T-cell (primary cell): ENCODE measurements at regions of chr2 and their contacts with region 1.

Region 1: DNA sequence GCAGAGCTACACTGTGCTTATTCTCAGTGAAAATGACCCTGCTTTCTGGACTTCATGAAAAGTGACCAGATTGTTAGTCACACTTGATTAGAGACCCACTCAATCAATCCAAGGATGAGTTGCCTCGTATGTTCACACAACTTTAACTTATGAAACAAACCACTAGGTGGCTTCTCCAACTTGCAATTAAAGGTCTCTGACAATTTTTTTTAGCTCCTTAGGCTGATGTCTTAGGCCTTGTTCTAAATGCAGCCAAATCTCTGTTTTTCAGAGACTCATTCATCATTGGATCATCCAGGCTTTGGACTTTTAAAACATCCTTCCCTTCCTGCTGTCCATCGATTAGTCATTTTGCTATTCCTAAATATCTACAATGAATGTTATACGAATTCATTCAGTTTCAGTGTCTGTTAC is 63.4 kb downstream of the MREG start:
- DNase-seq: peak in 1 of 35 experiments; percentile 51
- ATAC-seq: peak in 3 of 4 experiments; percentile 40 to 56 (median 41)
- H3K4me3 ChIP-seq: no peak overlapping the region
- H3K4me3 Mint-ChIP-seq: no peak overlapping the region
- H3K27ac ChIP-seq: no peak overlapping the region
- H3K27ac Mint-ChIP-seq: no peak overlapping the region
- H3K4me1 ChIP-seq: peaks cover 0 to 2% of the 10 kb centered on the region in 2 experiments
- H3K4me1 Mint-ChIP-seq: no peaks in the 10 kb centered on the region
- H3K27me3 ChIP-seq: no peaks in the 10 kb centered on the region
- H3K27me3 Mint-ChIP-seq: no peaks in the 10 kb centered on the region

Region 2: GRCh38 chr2:215826838-215827441 is 123.1 kb before region 1 on chr2:
- CTCF ChIA-PET with region 1: no interaction called
- POLR2A ChIA-PET with region 1: no interaction called
- DNase-seq: no peak
- ATAC-seq: no peak
- H3K4me3 ChIP-seq: no peak overlapping the region
- H3K4me3 Mint-ChIP-seq: no peak overlapping the region
- H3K27ac ChIP-seq: no peak overlapping the region
- H3K27ac Mint-ChIP-seq: no peak overlapping the region
- H3K4me1 ChIP-seq: no peaks in the 10 kb centered on the region
- H3K4me1 Mint-ChIP-seq: peaks cover 0 to 5% (median 1%) of the 10 kb centered on the region in 3 donors
- H3K27me3 ChIP-seq: peaks cover 0 to 2% of the 10 kb centered on the region in 2 experiments
- H3K27me3 Mint-ChIP-seq: no peaks in the 10 kb centered on the region

Region 3: DNA sequence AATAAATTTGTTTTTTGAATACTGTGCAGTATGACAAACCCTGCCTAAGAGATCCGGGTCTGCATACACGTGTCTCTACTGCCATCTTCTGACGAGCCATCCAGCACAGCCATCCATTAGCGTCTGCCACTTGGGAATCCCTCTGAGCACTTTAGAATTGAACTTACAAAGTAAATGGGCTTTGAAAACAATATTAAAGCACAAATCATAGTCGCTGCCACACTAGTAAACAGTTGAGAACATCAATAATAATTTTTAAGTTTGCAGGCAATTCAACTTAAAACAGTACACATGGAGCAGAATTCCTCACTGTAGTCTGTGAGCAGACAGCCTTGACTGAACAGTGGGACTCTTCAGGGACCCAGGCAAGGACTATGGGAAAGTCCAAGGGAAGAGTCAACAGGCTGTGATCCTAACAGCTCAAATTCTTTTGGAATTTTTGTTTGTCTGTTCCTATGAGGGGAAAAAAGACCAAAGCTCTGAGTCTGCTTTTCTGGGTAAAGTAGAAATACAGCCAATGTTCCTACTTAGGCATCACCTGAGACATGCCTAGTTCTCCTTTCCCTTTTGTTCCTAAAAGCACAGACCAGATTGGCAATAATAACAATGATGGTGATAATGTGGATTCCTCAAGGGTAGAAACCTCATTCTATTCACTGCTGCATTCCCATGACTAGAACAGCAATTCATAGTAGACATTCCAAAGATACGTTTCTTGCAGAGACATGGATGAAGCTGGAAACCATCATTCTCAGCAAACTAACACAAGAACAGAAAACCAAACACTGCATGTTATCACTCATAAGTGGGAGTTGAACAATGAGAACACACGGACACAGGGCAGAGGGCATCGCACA is 29.5 kb before region 1 on chr2:
- CTCF ChIA-PET with region 1: no interaction called
- POLR2A ChIA-PET with region 1: no interaction called
- DNase-seq: peak in 34 of 35 experiments; percentile 3 to 75 (median 40)
- ATAC-seq: peak; percentile 48 to 73 (median 70)
- H3K4me3 ChIP-seq: no peak overlapping the region
- H3K4me3 Mint-ChIP-seq: no peak overlapping the region
- H3K27ac ChIP-seq: no peak overlapping the region
- H3K27ac Mint-ChIP-seq: no peak overlapping the region
- H3K4me1 ChIP-seq: no peaks in the 10 kb centered on the region
- H3K4me1 Mint-ChIP-seq: no peaks in the 10 kb centered on the region
- H3K27me3 ChIP-seq: no peaks in the 10 kb centered on the region
- H3K27me3 Mint-ChIP-seq: peaks cover 6 to 10% of the 10 kb centered on the region in 2 donors

Region 4: GRCh38 chr2:215931256-215931903 is 18.6 kb before region 1 on chr2:
- CTCF ChIA-PET with region 1: no interaction called
- POLR2A ChIA-PET with region 1: no interaction called
- DNase-seq: peak in 27 of 35 experiments; percentile 2 to 68 (median 22)
- ATAC-seq: peak in 3 of 4 experiments; percentile 43 to 56 (median 50)
- H3K4me3 ChIP-seq: no peak overlapping the region
- H3K4me3 Mint-ChIP-seq: no peak overlapping the region
- H3K27ac ChIP-seq: no peak overlapping the region
- H3K27ac Mint-ChIP-seq: no peak overlapping the region
- H3K4me1 ChIP-seq: no peaks in the 10 kb centered on the region
- H3K4me1 Mint-ChIP-seq: no peaks in the 10 kb centered on the region
- H3K27me3 ChIP-seq: no peaks in the 10 kb centered on the region
- H3K27me3 Mint-ChIP-seq: peaks cover 4 to 9% of the 10 kb centered on the region in 2 donors

Region 5: DNA sequence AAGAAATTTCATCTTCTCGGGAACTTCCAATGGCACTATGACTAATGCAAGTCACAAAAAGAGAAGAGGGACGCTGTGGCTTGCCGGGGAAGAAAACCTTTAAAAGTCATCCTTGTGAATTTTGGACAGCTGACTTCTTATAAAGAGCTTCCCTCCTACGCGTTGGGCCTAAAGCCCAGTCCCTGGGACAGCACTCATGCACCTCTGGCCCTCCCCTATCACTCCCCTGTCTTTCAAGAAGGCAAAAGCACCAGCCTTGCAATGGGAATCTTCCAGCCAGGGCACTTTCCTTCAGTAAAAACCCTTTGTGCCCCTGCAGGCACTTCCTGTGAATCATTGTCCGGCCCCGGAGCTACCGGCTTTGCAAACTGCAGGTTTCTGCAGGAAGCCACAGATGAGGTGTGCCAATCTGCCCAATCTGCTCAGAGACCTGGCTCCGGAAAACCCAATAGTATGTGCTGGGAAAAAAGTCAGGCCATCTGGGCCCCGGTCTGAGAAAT is 56.2 kb after region 1 on chr2:
- CTCF ChIA-PET with region 1: interaction called in 1 of 2 experiments, 3 read pairs
- POLR2A ChIA-PET with region 1: interaction called in 1 of 2 experiments, 10 read pairs
- DNase-seq: peak in 14 of 35 experiments; percentile 6 to 35 (median 16)
- ATAC-seq: peak; percentile 57 to 80 (median 68)
- H3K4me3 ChIP-seq: no peak overlapping the region
- H3K4me3 Mint-ChIP-seq: peak overlapping the region; percentile 5 to 25 (median 13)
- H3K27ac ChIP-seq: no peak overlapping the region
- H3K27ac Mint-ChIP-seq: peak overlapping the region; percentile 69 to 77
- H3K4me1 ChIP-seq: peaks cover 22 to 37% of the 10 kb centered on the region in 2 experiments
- H3K4me1 Mint-ChIP-seq: peaks cover 35 to 47% (median 44%) of the 10 kb centered on the region in 3 donors
- H3K27me3 ChIP-seq: no peaks in the 10 kb centered on the region
- H3K27me3 Mint-ChIP-seq: no peaks in the 10 kb centered on the region

Region 6: DNA sequence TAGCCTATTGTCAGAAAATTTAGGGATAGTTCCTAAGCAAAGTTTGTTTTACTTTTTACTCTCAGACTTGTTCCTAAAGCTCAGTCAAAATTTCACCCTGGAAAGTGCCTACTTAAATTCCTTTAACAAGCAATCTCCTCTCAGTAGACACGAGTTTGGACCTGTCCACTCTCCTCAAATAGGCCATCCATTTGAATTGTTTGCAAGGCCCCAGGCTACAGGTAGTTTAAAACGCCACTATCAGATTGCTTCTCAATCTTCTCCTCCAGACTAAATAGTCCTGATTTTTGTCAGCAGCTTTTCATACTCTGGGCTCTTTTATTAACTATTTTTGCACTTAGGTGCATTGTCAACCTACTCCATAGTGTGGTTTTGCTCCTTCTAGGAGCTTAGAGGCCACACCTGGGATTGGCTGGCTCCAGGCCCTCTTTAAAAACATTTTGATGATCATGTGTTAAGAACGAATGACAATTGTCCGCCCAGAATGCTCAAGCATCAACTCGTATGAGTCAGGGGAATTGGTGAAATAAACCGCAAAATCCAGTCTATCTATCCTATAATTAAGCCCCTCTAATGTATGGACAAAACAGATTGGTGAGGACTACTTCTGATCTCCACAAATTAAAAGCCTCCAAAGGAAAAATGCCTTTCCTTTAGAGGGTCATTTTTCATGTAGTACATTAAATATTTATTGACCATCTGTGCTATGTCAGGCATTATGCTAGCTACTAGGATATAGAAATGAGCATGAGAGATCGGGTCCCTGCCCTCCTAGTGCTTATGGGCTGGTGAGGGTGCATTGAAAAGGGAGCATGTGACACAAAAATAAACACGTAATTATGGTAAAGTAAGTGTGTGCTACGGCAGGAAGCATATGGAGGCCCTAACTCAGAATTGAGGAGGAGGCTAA is 1243.7 kb after region 1 on chr2:
- CTCF ChIA-PET with region 1: no interaction called
- POLR2A ChIA-PET with region 1: no interaction called
- DNase-seq: no peak
- ATAC-seq: no peak
- H3K4me3 ChIP-seq: no peak overlapping the region
- H3K4me3 Mint-ChIP-seq: no peak overlapping the region
- H3K27ac ChIP-seq: no peak overlapping the region
- H3K27ac Mint-ChIP-seq: no peak overlapping the region
- H3K4me1 ChIP-seq: peaks cover 0 to 2% of the 10 kb centered on the region in 2 experiments
- H3K4me1 Mint-ChIP-seq: no peaks in the 10 kb centered on the region
- H3K27me3 ChIP-seq: no peaks in the 10 kb centered on the region
- H3K27me3 Mint-ChIP-seq: peaks cover 2 to 3% of the 10 kb centered on the region in 2 donors